ENCODE measurements at regions of chr4 and their contacts with region 1.

Region 1: DNA sequence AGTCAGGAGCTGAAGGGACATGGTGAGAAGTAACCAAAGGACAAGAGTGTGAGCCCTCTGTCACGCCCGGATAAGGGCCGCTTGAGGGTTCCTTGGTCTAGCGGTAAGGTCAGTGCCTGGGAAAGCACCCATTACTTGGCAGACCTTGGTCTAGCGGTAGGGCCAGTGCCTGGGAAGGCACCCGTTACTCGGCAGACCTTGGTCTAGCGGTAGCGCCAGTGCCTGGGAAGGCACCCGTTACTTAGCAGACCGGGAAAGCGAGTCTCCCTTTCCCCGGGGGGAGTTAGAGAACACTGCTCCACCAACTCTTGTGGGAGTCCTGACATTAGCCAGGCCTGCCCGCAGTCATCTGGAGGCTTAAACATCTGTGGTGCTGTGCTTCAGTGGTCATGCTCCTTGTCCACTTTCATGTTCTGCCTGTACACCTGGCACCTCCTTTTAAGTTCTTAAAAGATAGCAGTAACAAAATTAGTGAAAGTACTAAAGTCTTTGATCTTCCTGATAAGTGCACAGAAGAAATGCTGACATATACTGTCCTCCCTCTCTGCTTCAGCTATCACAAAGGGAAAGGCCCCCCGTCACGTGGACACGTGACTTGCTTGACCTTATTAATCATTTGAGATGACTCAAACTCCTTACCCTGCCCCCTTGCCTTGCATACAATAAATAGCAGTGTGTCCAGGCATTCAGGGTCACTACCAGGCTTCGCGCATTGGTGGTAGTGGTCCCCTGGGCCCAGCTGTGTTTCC is 9.3 kb upstream of the SEC24B start:
- DNase-seq: no peak
- ATAC-seq: no peak

Region 2: GRCh38 chr4:109622626-109623025 is 198.4 kb after region 1 on chr4:
- intact Hi-C with region 1: no loop called
- DNase-seq: no peak
- ATAC-seq: no peak

Region 3: GRCh38 chr4:109815151-109816081 is 391.1 kb after region 1 on chr4 and contains the start of gene GAR1:
- intact Hi-C with region 1: loop called in 1 of 2 experiments (anchors 5 kb)
- DNase-seq: peak; percentile 93
- ATAC-seq: peak; percentile 99 to 100
- total RNA-seq, gene GAR1: 9.6 to 12.0 TPM

Region 4: GRCh38 chr4:109826719-109827118 is 402.5 kb after region 1 on chr4:
- intact Hi-C with region 1: loop called in 1 of 2 experiments (anchors 5 kb)
- DNase-seq: no peak
- ATAC-seq: peak in 1 of 2 donors; percentile 42